Dorsolateral prefrontal cortex (tissue), 120 donors: ENCODE measurements at regions of chr11 and their contacts with region 1.

Region 1: DNA sequence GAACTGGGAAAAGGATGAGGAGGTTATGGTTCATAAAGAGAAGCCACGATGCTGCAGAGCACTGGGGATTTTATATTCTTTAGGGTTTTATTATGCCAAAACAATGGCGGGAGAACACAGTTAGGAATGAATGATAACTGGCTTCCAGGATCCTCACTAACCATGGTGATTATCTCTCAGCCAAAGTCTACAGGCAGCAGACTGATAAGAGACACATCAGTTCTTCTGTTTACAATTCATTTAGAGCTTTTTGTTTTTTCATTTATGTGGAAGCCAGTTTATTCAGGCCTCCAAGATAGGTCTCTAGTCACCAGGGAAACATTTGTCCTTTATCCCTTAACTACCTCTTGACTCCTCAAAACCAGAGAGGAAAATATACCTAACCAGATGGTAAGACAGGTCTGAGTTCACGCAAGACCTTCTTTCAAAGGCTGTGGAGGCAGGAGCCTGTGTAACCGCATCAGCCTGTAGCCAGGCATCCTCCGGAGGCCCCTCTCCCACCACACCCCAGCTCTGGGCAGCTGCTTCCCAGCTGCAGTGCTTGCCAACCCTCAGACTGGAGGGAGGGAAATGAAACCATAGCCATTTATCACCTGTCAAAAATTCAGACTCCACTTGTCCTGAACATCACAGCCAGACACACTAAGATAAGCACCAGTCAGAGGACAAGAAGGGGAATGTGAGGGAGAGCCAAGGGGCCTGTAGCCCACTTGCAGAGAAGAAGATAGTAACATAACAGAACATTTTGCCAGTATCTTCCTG is 57.2 kb upstream of the FAM181B start:
- DNase-seq: no peak
- H3K4me3 ChIP-seq: no peak overlapping the region
- H3K27ac ChIP-seq: peak overlapping the region in 3 of 59 donors; percentile 8 to 44 (median 25)
- H3K27me3 ChIP-seq: no peaks in the 10 kb centered on the region
- CTCF ChIP-seq: no peak

Region 2: GRCh38 chr11:81070948-81071347 is 1720.0 kb before region 1 on chr11:
- intact Hi-C with region 1: loop called in 1 of 2 experiments (anchors 5 kb)
- DNase-seq: no peak
- H3K4me3 ChIP-seq: no peak overlapping the region
- H3K27ac ChIP-seq: no peak overlapping the region
- H3K27me3 ChIP-seq: no peaks in the 10 kb centered on the region
- CTCF ChIP-seq: no peak

Region 3: GRCh38 chr11:81255895-81256294 is 1535.0 kb before region 1 on chr11:
- intact Hi-C with region 1: no loop called
- DNase-seq: no peak
- H3K4me3 ChIP-seq: no peak overlapping the region
- H3K27ac ChIP-seq: no peak overlapping the region
- H3K27me3 ChIP-seq: no peaks in the 10 kb centered on the region
- CTCF ChIP-seq: no peak

Region 4: DNA sequence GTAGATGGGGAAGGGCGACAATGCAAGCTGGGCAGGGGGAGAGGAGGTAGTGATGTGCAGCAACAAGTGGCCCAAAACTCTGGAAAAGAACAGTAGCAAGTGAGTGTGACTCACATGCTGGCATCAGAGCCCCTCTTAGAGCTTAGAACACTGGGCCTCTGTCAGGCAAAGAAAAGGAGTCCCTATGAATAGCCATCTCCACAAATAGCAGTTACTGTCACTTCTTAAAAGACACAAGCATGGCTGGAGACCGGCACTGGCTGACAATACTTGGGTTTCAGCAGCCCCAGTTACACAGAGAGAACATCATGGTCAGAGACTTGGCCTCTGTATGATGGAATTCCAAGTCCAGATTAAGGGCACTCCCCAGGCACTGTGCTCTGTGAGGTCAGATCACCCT is 51.1 kb after region 1 on chr11:
- intact Hi-C with region 1: loop called in 1 of 2 experiments (anchors 10 kb)
- DNase-seq: peak in 8 of 10 donors; percentile 36 to 85 (median 68)
- H3K4me3 ChIP-seq: peak overlapping the region in 5 of 59 donors; percentile 3 to 15 (median 13)
- H3K27ac ChIP-seq: peak overlapping the region; percentile 51 to 96 (median 89)
- H3K27me3 ChIP-seq: no peaks in the 10 kb centered on the region
- CTCF ChIP-seq: no peak